Posterior cingulate gyrus (tissue), 11 donors: ENCODE measurements at regions of chr11 and their contacts with region 1.

Region 1: DNA sequence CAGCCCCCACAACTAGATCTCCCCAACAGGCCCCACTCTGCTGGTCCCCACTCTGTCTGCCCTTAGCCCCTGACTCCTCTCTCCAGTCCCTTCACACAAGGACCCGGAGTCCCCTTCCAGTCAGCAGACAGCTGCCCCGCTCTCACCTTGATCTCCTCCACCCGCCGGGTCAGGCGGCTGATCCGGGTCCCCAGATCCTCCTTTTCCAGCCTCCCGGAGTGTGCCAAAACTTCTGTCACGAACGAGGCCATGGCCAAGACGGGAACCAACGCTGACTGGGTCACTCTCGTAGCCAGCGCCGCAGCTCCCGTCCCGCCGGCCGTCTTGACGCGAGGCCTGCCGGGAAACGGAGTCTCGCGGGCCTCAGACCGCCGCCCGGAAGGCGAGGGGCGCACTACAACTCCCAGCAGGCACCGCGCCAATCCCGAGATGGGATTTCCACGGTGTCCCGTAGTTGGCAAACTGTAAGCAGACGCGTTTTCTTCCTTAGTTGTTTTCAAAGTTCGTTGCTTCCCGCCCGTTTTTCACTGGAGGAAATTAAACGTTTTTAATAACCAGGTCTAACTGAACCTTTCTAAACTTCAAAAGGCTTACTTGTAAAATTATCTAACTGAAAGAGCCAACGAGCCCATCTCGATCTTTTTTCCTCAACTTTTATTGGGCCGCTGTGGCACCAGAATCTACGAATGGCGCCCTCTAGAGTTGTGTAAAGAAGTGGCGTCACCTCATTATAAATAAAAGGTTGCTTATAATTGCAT is at the start of gene ZW10:
- DNase-seq: peak; percentile 93 to 99 (median 96)

Region 2: DNA sequence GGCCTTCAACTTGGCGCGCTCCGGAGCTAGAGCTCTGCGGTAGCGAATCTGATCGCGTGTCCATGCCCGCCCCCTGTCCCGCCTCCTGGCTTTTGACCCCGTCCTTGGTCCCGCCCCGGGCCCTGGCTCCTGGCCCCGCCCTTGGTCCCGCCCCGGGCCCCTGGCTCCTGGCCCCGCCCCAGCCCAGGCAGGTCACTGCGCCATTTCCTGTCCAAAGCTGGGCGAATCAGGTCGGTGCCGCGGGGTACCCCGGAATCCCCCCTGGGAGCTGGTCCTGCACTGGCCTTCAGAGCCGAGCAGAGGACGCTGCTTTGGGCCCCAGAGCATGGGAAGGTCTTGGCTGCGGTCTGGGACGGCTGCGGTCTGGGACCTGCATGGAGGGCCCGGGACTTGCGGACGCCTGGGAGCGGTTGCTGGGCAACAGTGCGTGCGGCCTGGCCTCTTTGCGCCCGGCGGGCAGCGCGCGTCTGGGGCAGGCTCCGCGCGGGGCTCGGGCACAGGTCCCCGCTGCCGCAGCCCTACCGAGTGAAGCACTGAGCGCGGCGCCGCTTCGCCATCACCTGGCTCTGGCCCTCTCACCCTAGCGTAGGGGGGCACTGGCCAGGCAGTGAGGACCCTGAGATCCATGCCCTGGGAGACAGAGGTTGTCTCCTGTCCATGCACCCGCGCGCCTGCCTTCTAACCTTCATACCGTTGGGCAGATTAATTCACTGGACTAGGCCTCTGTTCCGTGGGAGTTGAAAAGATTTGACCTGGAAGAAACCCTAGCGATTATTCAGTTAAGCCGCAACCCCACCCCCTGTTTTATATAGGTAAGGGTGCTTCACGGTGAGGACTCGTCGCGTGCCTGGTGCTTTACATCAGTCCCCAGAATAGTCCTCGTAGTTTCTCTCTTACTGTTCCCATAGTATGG is 458.9 kb before region 1 on chr11 and contains the start of gene TTC12:
- intact Hi-C with region 1: loop called (anchors 2 kb)
- DNase-seq: peak; percentile 81 to 99 (median 92)

Region 3: GRCh38 chr11:113875234-113876073 is 101.9 kb after region 1 on chr11 and contains the start of gene USP28:
- intact Hi-C with region 1: loop called (anchors 2 kb)
- DNase-seq: peak; percentile 95 to 100 (median 98)